ENCODE measurements at regions of chr17 and their contacts with region 1.

Region 1: GRCh38 chr17:50638851-50639767 is 4.4 kb downstream of the ABCC3 start:
- DNase-seq: peak; percentile 89
- H3K4me3 ChIP-seq: 0 out of 2 replicates have a peak overlapping the region, but pooled peaks have one; percentile 13
- H3K27ac ChIP-seq: peak overlapping the region; percentile 92
- H3K27me3 ChIP-seq: no peaks in the 10 kb centered on the region
- CTCF ChIP-seq: no peak

Region 2: GRCh38 chr17:50604513-50604912 is 34.6 kb before region 1 on chr17:
- CTCF ChIA-PET with region 1: no interaction called
- POLR2A ChIA-PET with region 1: no interaction called
- DNase-seq: no peak
- H3K4me3 ChIP-seq: no peak overlapping the region
- H3K27ac ChIP-seq: no peak overlapping the region
- H3K27me3 ChIP-seq: peaks cover 30% of the 10 kb centered on the region
- CTCF ChIP-seq: no peak

Region 3: GRCh38 chr17:50626037-50626574 is 13.0 kb before region 1 on chr17:
- CTCF ChIA-PET with region 1: interaction called, 49 read pairs
- POLR2A ChIA-PET with region 1: interaction called, 3 read pairs
- DNase-seq: peak; percentile 37
- H3K4me3 ChIP-seq: no peak overlapping the region
- H3K27ac ChIP-seq: no peak overlapping the region
- H3K27me3 ChIP-seq: peaks cover 6% of the 10 kb centered on the region
- CTCF ChIP-seq: peak; percentile 76

Region 4: GRCh38 chr17:50661795-50662391 is 22.8 kb after region 1 on chr17:
- CTCF ChIA-PET with region 1: interaction called, 3 read pairs
- POLR2A ChIA-PET with region 1: interaction called, 29 read pairs
- DNase-seq: peak; percentile 64
- H3K4me3 ChIP-seq: no peak overlapping the region
- H3K27ac ChIP-seq: peak overlapping the region; percentile 90
- H3K27me3 ChIP-seq: no peaks in the 10 kb centered on the region
- CTCF ChIP-seq: no peak